SK-N-SH (cell line): ENCODE measurements at regions of chr17 and their contacts with region 1.

Region 1: GRCh38 chr17:82781894-82782274 is 30.0 kb downstream of the TBCD start:
- DNase-seq: peak; percentile 98
- H3K4me3 ChIP-seq: no peak overlapping the region; a peak in 1 of 4 replicates
- H3K27ac ChIP-seq: peak overlapping the region in 1 of 2 experiments; percentile 19; a peak in 1 of 4 replicates
- H3K4me1 ChIP-seq: no peaks in the 10 kb centered on the region; a peak in 2 of 4 replicates
- H3K27me3 ChIP-seq: no peaks in the 10 kb centered on the region
- CTCF ChIP-seq: peak; percentile 100
- EP300 ChIP-seq: no peak
- RAD21 ChIP-seq: peak; percentile 99

Region 2: GRCh38 chr17:82863941-82864774 is 82.3 kb after region 1 on chr17:
- CTCF ChIA-PET with region 1: interaction called, 26 read pairs
- POLR2A ChIA-PET with region 1: no interaction called
- DNase-seq: peak; percentile 70
- H3K4me3 ChIP-seq: no peak overlapping the region
- H3K27ac ChIP-seq: peak overlapping the region; percentile 65 to 92
- H3K4me1 ChIP-seq: peaks cover 41 to 67% of the 10 kb centered on the region in 2 experiments
- H3K27me3 ChIP-seq: no peaks in the 10 kb centered on the region
- CTCF ChIP-seq: no peak
- EP300 ChIP-seq: no peak
- RAD21 ChIP-seq: no peak

Region 3: GRCh38 chr17:82882715-82883418 is 101.0 kb after region 1 on chr17:
- CTCF ChIA-PET with region 1: interaction called, 24 read pairs
- POLR2A ChIA-PET with region 1: no interaction called
- DNase-seq: no peak
- H3K4me3 ChIP-seq: no peak overlapping the region
- H3K27ac ChIP-seq: no peak overlapping the region; a peak in 1 of 4 replicates
- H3K4me1 ChIP-seq: peaks cover 11 to 58% of the 10 kb centered on the region in 2 experiments
- H3K27me3 ChIP-seq: no peaks in the 10 kb centered on the region
- CTCF ChIP-seq: no peak
- EP300 ChIP-seq: no peak
- RAD21 ChIP-seq: no peak

Region 4: GRCh38 chr17:82924798-82925197 is 142.9 kb after region 1 on chr17:
- CTCF ChIA-PET with region 1: interaction called, 30 read pairs
- POLR2A ChIA-PET with region 1: no interaction called
- DNase-seq: no peak
- H3K4me3 ChIP-seq: no peak overlapping the region
- H3K27ac ChIP-seq: no peak overlapping the region
- H3K4me1 ChIP-seq: no peaks in the 10 kb centered on the region
- H3K27me3 ChIP-seq: no peaks in the 10 kb centered on the region
- CTCF ChIP-seq: no peak
- EP300 ChIP-seq: no peak
- RAD21 ChIP-seq: no peak

Region 5: DNA sequence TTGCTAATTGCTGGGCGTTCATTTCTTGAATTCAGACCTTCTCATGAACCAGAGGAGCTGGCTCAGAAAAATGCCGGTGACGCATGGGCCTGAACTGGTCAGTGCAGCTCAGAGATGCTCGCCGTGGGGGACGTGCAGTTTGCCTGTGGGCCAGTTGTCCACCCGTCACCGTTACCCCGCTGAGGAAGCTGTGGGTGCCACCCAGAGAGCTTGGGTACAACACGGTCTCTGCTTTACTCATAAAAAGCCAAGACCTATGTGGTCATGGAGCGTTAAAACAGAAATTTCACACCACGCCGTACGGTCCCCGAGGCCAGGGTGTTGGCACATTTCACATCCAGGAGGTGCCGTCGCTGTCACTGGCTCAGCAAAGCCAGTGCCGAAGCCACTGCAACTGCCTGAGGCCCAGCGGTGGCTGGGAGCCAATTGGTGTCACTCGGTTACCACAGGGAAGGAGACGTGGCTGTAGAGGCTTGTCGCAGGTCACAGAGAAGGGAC is 418.4 kb after region 1 on chr17:
- CTCF ChIA-PET with region 1: interaction called, 12 read pairs
- POLR2A ChIA-PET with region 1: no interaction called
- DNase-seq: no peak
- H3K4me3 ChIP-seq: no peak overlapping the region
- H3K27ac ChIP-seq: peak overlapping the region in 1 of 2 experiments; percentile 72; a peak in 2 of 4 replicates
- H3K4me1 ChIP-seq: peaks cover 0 to 30% of the 10 kb centered on the region in 2 experiments; a peak in 3 of 4 replicates
- H3K27me3 ChIP-seq: no peaks in the 10 kb centered on the region
- CTCF ChIP-seq: no peak
- EP300 ChIP-seq: no peak
- RAD21 ChIP-seq: no peak